Ascending aorta (tissue), 2 donors: ENCODE measurements at regions of chr1 and their contacts with region 1.

Region 1: DNA sequence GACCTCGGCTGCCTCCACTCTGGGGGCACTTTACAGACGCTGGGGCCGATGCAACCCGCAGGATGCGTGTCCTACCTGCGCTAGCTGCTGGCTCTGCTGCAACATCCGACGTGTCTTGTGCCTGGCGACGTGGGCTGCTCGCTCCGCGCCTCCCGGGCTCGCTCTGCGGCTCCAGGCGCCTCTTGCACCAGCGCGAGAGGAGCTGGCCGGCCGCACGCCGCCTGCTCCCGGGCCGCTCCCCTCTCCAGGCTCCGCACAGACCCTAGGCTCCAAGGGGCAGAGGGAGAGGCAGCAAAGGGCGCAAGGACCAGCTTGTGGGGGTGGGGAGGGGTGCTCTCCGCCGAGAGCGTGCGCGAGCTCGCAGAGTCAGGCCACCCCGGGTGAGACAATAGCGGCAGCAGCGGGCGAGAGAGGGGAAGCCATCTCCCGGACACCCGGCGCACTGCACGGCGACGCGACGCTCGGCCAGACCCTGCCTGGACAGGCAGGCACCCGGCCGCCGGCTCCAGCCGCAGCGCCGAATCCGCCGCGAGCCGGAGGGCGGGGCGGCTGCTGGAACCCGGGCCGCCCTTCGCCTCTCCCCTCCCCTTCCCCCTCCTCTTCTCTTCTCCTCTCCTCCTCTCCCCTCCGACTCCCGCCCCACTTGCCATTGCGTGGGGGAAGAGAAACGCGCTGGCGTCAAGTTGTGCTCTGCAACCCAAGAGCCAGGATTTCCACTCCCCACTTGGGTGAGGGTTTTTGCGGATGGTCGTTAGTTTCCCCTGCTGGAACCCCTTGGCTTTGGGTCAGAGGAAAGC is at the start of gene PIK3C2B:
- DNase-seq: peak in 1 of 2 donors; percentile 88
- H3K4me3 ChIP-seq: peak within 1 kb of the TSS; percentile 93 to 96
- H3K27ac ChIP-seq: peak within 1 kb of the TSS; percentile 84 to 90
- H3K4me1 ChIP-seq: peaks cover 4 to 24% of the 10 kb centered on the region in 2 donors
- H3K27me3 ChIP-seq: no peaks in the 10 kb centered on the region
- CTCF ChIP-seq: peak; percentile 55 to 68 (median 60)
- total RNA-seq, gene PIK3C2B: 129 TPM

Region 2: DNA sequence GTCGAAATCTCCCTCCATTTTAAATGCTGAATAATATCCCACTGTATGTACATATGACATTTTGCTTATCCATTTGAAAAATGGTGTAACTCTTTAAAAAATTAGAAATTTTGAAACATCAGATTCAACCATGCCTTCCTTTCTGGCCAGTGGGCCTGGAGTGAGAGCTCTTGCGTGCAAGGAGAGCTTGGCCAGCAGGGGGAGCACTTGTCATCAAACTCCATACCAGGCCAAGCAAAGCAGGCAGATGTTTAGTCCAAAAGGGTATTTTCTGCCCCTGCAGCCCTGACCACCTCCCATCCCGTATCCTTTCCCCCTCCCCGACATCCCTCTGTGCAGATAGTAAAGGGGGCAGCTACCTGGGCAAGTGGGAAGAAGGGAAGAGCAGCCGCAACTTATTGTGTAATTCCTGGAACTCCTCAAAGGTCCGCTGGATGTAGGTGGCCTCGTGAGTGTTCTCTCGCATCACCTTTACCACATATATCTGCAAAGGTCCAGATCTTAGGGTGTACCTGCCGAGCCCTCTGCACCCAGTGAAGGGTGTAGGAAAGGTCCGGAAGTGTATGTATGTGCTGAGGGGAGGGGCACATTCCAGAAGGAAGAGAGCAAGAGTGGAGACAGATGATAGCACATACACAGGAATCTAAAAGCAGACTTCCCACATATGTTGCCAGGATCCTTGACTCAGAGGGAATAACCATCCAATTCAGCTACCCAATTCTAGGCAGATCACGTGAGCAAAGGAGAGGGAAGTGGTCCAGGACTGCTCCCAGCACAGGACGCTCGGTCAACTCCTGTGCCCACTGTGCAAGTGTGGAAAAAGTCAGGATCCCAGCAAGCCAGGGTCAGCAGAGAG is 62.9 kb before region 1 on chr1:
- intact Hi-C with region 1: loop called (anchors 2 kb)
- DNase-seq: peak in 1 of 2 donors; percentile 89
- H3K4me3 ChIP-seq: no peak overlapping the region
- H3K27ac ChIP-seq: peak overlapping the region; percentile 59 to 65
- H3K4me1 ChIP-seq: peaks cover 0 to 19% of the 10 kb centered on the region in 2 donors
- H3K27me3 ChIP-seq: no peaks in the 10 kb centered on the region
- CTCF ChIP-seq: peak; percentile 81 to 90 (median 89)

Region 3: DNA sequence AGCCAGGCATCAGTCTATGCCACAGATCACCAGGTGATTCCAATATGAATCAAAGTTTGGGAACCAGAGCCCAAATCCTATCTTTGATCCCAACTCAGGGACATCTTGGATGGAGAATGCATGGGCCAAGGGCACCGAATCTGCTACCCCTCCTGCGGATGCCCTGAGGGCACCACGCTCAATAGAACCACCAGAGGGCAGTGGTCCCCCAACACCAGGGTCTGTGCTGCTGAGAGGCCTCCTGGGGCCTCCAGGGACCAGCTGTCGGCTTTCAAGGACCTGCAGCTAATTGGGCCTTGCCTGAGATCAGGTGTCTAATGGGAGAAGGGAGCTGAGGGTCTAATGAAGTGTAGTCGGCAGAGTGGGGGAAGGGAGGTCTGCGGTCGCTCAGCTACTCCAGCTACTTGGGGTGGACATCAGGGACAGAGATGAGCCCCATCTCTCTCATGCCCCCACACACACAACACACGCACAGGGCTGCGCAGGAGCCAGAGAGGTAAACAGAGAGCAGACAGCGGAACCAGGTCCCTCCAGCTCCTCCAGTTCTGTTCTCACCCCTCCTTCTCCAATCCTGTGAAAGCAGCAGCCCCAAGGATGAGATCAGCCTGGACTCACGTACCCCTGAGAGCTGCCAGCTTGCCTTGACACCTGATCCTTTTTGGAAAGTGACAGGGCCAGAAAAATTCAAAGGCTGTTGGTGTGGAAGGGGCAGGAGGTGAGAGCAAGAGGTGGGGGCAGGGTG is 47.9 kb before region 1 on chr1:
- intact Hi-C with region 1: loop called (anchors 2 kb)
- DNase-seq: peak in 1 of 2 donors; percentile 85
- H3K4me3 ChIP-seq: no peak overlapping the region
- H3K27ac ChIP-seq: peak overlapping the region; percentile 19 to 58
- H3K4me1 ChIP-seq: peaks cover 12 to 43% of the 10 kb centered on the region in 2 donors
- H3K27me3 ChIP-seq: no peaks in the 10 kb centered on the region
- CTCF ChIP-seq: peak; percentile 69 to 84 (median 72)

Region 4: GRCh38 chr1:204465546-204466415 is 28.7 kb before region 1 on chr1:
- intact Hi-C with region 1: loop called (anchors 1 kb)
- DNase-seq: peak in 1 of 2 donors; percentile 44
- H3K4me3 ChIP-seq: peak overlapping the region; percentile 18 to 50
- H3K27ac ChIP-seq: peak overlapping the region; percentile 95 to 97
- H3K4me1 ChIP-seq: peaks cover 43 to 68% of the 10 kb centered on the region in 2 donors
- H3K27me3 ChIP-seq: no peaks in the 10 kb centered on the region
- CTCF ChIP-seq: no peak

Region 5: GRCh38 chr1:204558467-204558866 is 64.0 kb after region 1 on chr1:
- intact Hi-C with region 1: no loop called
- DNase-seq: no peak
- H3K4me3 ChIP-seq: no peak overlapping the region
- H3K27ac ChIP-seq: no peak overlapping the region
- H3K4me1 ChIP-seq: no peaks in the 10 kb centered on the region
- H3K27me3 ChIP-seq: no peaks in the 10 kb centered on the region
- CTCF ChIP-seq: no peak

Region 6: GRCh38 chr1:205812878-205813754 is 1318.6 kb after region 1 on chr1 and contains the start of gene SLC41A1:
- intact Hi-C with region 1: no loop called
- DNase-seq: peak; percentile 89 to 97
- H3K4me3 ChIP-seq: peak within 1 kb of the TSS; percentile 94
- H3K27ac ChIP-seq: peak within 1 kb of the TSS; percentile 94 to 96
- H3K4me1 ChIP-seq: peaks cover 5 to 32% of the 10 kb centered on the region in 2 donors
- H3K27me3 ChIP-seq: no peaks in the 10 kb centered on the region
- CTCF ChIP-seq: no peak
- total RNA-seq, gene SLC41A1: 28.8 TPM